Caco-2 (cell line): ENCODE measurements at regions of chr3 and their contacts with region 1.

Region 1: DNA sequence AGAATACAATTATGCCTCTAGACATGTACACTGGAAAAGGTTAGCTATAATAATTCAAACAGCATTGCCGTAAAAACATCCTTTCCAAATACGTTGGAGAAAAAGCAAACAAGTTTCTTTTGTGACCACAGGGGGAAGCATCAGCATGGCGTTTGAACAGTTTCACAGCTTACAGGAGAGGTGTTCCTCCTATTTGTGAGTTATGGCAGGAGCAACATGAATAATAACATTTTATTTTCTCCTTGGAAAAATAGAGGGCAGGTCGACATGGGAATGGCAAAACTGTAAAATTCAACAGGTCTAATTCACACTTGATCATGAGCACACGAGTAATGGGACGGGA is 39.7 kb upstream of the GADL1 start:
- DNase-seq: peak; percentile 44 to 53
- H3K4me3 ChIP-seq: no peak overlapping the region
- H3K4me3 Mint-ChIP-seq: peak overlapping the region; percentile 17
- H3K27ac Mint-ChIP-seq: peak overlapping the region; percentile 42
- H3K4me1 ChIP-seq: peaks cover 15% of the 10 kb centered on the region
- H3K4me1 Mint-ChIP-seq: peaks cover 11% of the 10 kb centered on the region
- H3K27me3 ChIP-seq: no peaks in the 10 kb centered on the region
- H3K27me3 Mint-ChIP-seq: no peaks in the 10 kb centered on the region
- CTCF ChIP-seq: peak; percentile 66 to 67

Region 2: DNA sequence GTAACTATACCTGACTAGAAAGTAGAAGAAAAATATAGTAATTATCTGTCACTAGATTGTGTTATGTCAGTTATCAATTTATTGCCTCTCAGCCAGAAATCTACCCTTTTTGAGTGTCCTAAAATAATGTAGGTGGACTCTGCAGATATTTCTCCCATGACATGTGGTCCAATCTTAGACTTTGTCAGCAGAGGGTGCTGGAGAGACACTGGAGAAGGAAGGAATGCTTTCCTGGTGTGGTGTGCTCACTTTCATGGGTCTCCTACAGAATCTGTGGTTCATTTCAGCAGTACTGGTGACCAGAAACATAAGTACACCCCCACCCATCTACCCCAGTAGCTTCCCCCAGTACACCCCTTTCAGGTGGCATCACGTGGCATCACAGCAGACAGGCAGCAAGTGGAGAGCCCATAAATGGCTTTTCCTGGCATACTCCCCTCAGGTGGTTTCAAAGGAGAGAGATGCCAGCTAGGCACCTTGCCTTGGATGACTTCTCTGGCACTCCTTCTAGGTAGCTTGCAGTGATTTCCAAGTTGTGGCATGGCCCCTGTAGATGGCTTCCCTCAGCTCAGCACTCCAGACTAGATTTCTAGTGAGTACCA is 154.4 kb before region 1 on chr3:
- CTCF ChIA-PET with region 1: no interaction called
- POLR2A ChIA-PET with region 1: no interaction called
- intact Hi-C with region 1: loop called (anchors 2 kb)
- DNase-seq: peak; percentile 42 to 70
- H3K4me3 ChIP-seq: no peak overlapping the region
- H3K4me3 Mint-ChIP-seq: no peak overlapping the region
- H3K27ac Mint-ChIP-seq: no peak overlapping the region
- H3K4me1 ChIP-seq: no peaks in the 10 kb centered on the region
- H3K4me1 Mint-ChIP-seq: peaks cover 11% of the 10 kb centered on the region
- H3K27me3 ChIP-seq: no peaks in the 10 kb centered on the region
- H3K27me3 Mint-ChIP-seq: no peaks in the 10 kb centered on the region
- CTCF ChIP-seq: peak; percentile 62 to 78

Region 3: GRCh38 chr3:30904986-30905657 is 29.1 kb before region 1 on chr3:
- CTCF ChIA-PET with region 1: no interaction called
- POLR2A ChIA-PET with region 1: no interaction called
- intact Hi-C with region 1: loop called (anchors 1 kb)
- DNase-seq: peak; percentile 70 to 71
- H3K4me3 ChIP-seq: no peak overlapping the region
- H3K4me3 Mint-ChIP-seq: no peak overlapping the region
- H3K27ac Mint-ChIP-seq: peak overlapping the region; percentile 81
- H3K4me1 ChIP-seq: peaks cover 28% of the 10 kb centered on the region
- H3K4me1 Mint-ChIP-seq: peaks cover 21% of the 10 kb centered on the region
- H3K27me3 ChIP-seq: no peaks in the 10 kb centered on the region
- H3K27me3 Mint-ChIP-seq: no peaks in the 10 kb centered on the region
- CTCF ChIP-seq: no peak

Region 4: GRCh38 chr3:31010491-31010890 is 76.3 kb after region 1 on chr3:
- CTCF ChIA-PET with region 1: interaction called, 7 read pairs
- POLR2A ChIA-PET with region 1: no interaction called
- intact Hi-C with region 1: loop called (anchors 1 kb)
- DNase-seq: no peak
- H3K4me3 ChIP-seq: no peak overlapping the region
- H3K4me3 Mint-ChIP-seq: no peak overlapping the region
- H3K27ac Mint-ChIP-seq: peak overlapping the region; percentile 67
- H3K4me1 ChIP-seq: peaks cover 25% of the 10 kb centered on the region
- H3K4me1 Mint-ChIP-seq: peaks cover 33% of the 10 kb centered on the region
- H3K27me3 ChIP-seq: no peaks in the 10 kb centered on the region
- H3K27me3 Mint-ChIP-seq: no peaks in the 10 kb centered on the region
- CTCF ChIP-seq: no peak

Region 5: DNA sequence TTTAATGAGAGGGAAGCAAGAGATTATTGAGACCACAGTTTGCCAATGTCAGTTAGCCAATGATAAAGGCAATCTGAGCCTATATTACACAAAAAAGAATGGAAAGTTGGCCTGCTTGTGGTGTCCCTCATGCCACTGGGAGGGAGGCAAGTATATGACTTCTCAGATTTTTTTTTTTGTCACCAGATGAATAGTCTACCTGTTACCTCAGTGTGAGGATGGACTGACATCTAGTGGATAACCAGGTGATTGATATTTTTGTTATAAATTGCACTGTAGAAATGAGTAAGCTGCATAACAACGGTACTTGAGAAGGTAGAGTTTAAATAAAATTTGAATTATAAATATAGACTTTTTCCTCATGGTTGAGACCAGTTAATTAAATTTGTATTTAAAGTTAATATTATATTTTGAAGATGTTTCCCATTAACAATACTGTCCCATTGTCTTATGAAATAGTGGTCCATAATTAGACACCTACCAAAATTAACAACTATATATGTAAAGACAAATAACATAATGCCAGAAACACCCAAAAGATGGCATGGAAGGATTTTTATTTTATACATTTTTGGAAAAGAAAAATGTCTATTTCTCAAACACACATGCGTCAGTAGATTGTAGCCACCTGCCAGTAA is 198.1 kb after region 1 on chr3:
- CTCF ChIA-PET with region 1: interaction called, 8 read pairs
- POLR2A ChIA-PET with region 1: no interaction called
- intact Hi-C with region 1: loop called (anchors 1 kb)
- DNase-seq: peak in 1 of 2 experiments; percentile 60
- H3K4me3 ChIP-seq: no peak overlapping the region
- H3K4me3 Mint-ChIP-seq: no peak overlapping the region
- H3K27ac Mint-ChIP-seq: no peak overlapping the region
- H3K4me1 ChIP-seq: peaks cover 8% of the 10 kb centered on the region
- H3K4me1 Mint-ChIP-seq: no peaks in the 10 kb centered on the region
- H3K27me3 ChIP-seq: no peaks in the 10 kb centered on the region
- H3K27me3 Mint-ChIP-seq: no peaks in the 10 kb centered on the region
- CTCF ChIP-seq: peak; percentile 63 to 69

Region 6: DNA sequence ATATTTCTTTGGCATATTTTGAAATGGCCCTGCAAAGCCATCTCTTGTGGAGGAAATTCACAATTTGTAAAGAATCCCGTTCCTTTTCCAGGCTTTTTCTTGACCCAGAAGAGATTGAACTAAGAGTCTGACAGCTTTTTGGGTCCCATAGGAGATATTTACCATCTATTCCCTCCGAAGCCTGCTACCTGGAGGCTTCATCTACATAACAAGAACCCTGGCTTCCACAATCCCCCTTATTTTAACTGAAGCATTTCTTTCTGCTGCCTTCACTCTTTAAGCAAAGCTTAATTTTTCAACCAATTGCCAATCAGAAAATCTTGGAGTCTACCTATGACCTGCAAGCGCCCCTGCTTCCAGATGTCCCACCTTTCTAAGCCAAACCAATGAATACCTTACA is 208.4 kb after region 1 on chr3:
- CTCF ChIA-PET with region 1: no interaction called
- POLR2A ChIA-PET with region 1: no interaction called
- intact Hi-C with region 1: no loop called
- DNase-seq: no peak
- H3K4me3 ChIP-seq: no peak overlapping the region
- H3K4me3 Mint-ChIP-seq: no peak overlapping the region
- H3K27ac Mint-ChIP-seq: no peak overlapping the region
- H3K4me1 ChIP-seq: no peaks in the 10 kb centered on the region
- H3K4me1 Mint-ChIP-seq: peaks cover 11% of the 10 kb centered on the region
- H3K27me3 ChIP-seq: no peaks in the 10 kb centered on the region
- H3K27me3 Mint-ChIP-seq: no peaks in the 10 kb centered on the region
- CTCF ChIP-seq: no peak

Region 7: DNA sequence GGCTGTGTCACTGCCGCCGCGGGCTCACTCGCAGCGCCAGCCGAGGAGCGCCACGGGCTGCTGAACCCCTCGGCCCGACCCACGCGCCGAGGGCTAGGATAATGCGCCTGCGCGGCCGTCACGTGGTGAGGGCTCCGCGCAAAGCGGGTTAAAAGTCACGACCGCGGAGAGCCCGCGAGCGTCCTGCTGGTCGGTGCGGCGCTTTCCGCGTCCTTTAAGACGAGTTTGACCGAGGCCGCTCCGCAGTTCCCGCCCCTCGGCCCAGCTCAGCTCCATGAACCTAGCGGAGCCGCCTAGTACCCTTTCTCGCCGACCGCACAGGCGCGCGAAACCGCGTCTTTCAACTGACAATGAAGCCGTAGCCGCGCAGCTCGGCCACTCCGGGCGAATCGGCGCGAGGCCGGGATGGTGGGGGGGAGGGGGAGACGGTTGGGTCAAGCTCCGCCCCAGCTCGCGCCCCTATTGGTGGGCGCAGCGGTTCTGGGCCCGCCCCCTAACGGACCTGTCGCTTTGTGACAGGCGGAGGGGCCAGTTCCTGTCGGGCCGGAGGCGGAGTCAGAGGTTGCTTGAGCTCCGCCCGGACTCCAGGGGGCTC is 597.9 kb after region 1 on chr3:
- CTCF ChIA-PET with region 1: no interaction called
- POLR2A ChIA-PET with region 1: no interaction called
- intact Hi-C with region 1: loop called (anchors 10 kb)
- DNase-seq: peak; percentile 99
- H3K4me3 ChIP-seq: peak overlapping the region; percentile 97
- H3K4me3 Mint-ChIP-seq: peak overlapping the region; percentile 89
- H3K27ac Mint-ChIP-seq: peak overlapping the region; percentile 98
- H3K4me1 ChIP-seq: peaks cover 19% of the 10 kb centered on the region
- H3K4me1 Mint-ChIP-seq: peaks cover 12% of the 10 kb centered on the region
- H3K27me3 ChIP-seq: no peaks in the 10 kb centered on the region
- H3K27me3 Mint-ChIP-seq: no peaks in the 10 kb centered on the region
- CTCF ChIP-seq: no peak